ENCODE measurements at regions of chr18 and their contacts with region 1.

Region 1: GRCh38 chr18:658001-658946 is 821 bp downstream of the TYMS start:
- DNase-seq: peak; percentile 88
- H3K4me3 ChIP-seq: peak overlapping the region; percentile 97
- H3K27ac ChIP-seq: peak overlapping the region; percentile 91
- H3K4me1 ChIP-seq: peaks cover 24% of the 10 kb centered on the region
- CTCF ChIP-seq: no peak

Region 2: GRCh38 chr18:686339-687111 is 28.3 kb after region 1 on chr18:
- CTCF ChIA-PET with region 1: no interaction called
- POLR2A ChIA-PET with region 1: no interaction called
- intact Hi-C with region 1: no loop called
- DNase-seq: no peak
- H3K4me3 ChIP-seq: no peak overlapping the region
- H3K27ac ChIP-seq: no peak overlapping the region
- H3K4me1 ChIP-seq: no peaks in the 10 kb centered on the region
- CTCF ChIP-seq: no peak

Region 3: DNA sequence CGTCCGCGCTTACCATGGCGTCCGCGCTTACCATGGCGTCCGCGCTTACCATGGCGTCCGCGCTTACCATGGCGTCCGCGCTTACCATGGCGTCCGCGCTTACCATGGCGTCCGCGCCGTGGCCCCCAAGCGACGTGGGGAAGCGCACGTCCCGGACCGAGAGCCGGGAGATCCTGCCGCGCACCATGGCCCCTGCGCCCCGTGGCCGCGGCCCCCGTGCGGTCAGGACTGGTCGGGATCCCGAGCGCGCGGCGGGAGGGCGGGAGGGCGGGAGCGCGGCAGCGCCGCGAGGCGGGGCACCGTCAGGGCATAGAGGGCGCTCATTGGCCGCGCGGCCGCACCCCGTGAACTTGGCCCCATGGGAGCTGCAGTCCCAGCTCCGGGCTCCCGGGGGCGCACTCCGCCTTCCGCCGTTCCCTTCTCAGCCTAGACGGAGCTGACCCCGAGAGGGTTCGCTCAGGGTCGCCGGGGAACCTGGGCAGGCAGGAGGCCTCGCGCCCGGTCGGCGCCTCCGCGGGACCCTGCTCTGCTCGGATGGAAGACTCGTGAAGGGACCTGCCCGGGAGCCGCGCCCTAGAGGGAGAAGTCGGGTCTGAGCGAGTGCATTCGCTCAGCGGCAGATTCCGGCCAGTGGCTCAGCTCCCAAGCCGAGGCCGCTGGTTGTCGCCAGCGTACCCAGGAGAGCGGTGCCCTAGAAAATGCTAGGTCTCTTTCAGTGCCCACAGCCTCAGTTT is 54.3 kb after region 1 on chr18 and contains the start of gene ENOSF1:
- CTCF ChIA-PET with region 1: no interaction called
- POLR2A ChIA-PET with region 1: no interaction called
- intact Hi-C with region 1: loop called (anchors 5 kb)
- DNase-seq: peak; percentile 78
- H3K4me3 ChIP-seq: peak within 1 kb of the TSS; percentile 73
- H3K27ac ChIP-seq: peak within 1 kb of the TSS; percentile 45
- H3K4me1 ChIP-seq: no peaks in the 10 kb centered on the region
- CTCF ChIP-seq: peak; percentile 58
- total RNA-seq, gene ENOSF1: 30.5 and 40.1 TPM in 2 replicates

Measured in OCI-LY7 (cell line).